ENCODE measurements at regions of chr9 and their contacts with region 1.

Region 1: DNA sequence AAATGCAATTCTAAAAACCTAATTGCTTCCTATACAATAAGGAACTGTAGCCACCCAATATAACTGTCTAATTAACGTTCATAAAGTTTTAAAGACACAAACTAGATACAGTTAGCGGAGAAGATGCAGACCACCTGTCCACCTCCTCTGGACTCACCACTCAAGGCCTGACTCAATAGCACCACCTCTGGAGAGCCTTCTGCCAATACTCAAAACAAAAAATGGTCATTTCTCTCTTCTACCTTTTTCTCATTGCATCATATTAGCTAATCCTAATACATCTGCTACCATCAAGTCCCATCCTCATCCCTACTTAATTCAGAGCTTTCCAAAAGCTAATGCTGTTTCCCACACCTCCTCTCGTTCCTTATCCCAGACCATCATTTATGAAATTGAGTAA is 159.9 kb downstream of the MLLT3 start:
- DNase-seq: no peak
- ATAC-seq: no peak
- H3K4me3 ChIP-seq: no peak overlapping the region
- H3K4me3 Mint-ChIP-seq: peak overlapping the region in 3 of 10 donors; percentile 16 to 31 (median 17)
- H3K27ac ChIP-seq: no peak overlapping the region
- H3K27ac Mint-ChIP-seq: peak overlapping the region in 1 of 9 donors; percentile 3
- H3K4me1 ChIP-seq: peaks cover 0 to 31% of the 10 kb centered on the region in 2 donors
- H3K4me1 Mint-ChIP-seq: peaks cover 43 to 89% (median 81%) of the 10 kb centered on the region in 7 donors
- H3K27me3 ChIP-seq: no peaks in the 10 kb centered on the region
- H3K27me3 Mint-ChIP-seq: no peaks in the 10 kb centered on the region

Region 2: DNA sequence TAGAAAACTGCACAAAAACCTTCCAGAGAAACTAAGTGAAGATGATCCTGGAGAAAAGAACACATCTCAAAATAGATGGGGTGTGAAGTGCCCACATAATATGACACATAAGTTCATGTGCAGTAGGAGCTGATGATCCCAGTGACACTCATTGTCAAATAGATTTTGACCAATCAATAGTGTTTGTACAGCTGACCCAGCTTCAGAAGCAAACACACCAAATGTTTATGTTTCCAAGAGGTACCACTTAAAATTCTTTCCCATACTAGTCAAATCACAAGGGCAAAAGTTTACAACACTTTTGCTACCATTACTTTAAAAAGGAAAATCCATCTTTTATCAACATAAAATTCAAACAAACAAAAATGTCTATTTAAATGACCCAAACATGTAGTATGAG is 15.1 kb before region 1 on chr9:
- CTCF ChIA-PET with region 1: no interaction called
- POLR2A ChIA-PET with region 1: no interaction called
- intact Hi-C with region 1: loop called in 1 of 2 experiments (anchors 2 kb)
- DNase-seq: no peak
- ATAC-seq: no peak
- H3K4me3 ChIP-seq: no peak overlapping the region
- H3K4me3 Mint-ChIP-seq: no peak overlapping the region
- H3K27ac ChIP-seq: no peak overlapping the region
- H3K27ac Mint-ChIP-seq: no peak overlapping the region
- H3K4me1 ChIP-seq: peaks cover 0 to 8% of the 10 kb centered on the region in 2 donors
- H3K4me1 Mint-ChIP-seq: peaks cover 14 to 56% (median 35%) of the 10 kb centered on the region in 7 donors
- H3K27me3 ChIP-seq: no peaks in the 10 kb centered on the region
- H3K27me3 Mint-ChIP-seq: no peaks in the 10 kb centered on the region

Region 3: DNA sequence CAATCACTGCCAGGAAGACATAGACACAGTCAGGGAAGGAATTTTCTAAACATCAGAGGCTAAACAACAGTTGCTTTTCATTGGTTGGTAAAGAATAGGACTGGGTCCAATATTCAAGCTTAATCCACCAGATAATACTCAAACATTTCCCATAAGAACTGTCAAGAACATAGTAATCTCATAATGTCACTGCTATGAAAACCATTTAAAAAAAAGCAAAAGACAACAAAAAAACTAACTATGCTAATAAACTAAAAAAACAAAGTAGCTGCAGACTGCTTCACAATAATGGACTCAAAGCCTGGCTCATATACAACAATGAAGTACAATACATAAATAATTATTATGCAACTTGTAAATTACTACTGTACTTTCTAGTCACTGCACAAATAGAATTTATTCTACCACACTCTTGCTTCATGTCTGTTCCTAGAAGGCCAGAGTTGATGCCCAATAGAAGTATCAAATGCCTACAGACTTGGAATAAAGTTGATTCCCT is 11.2 kb after region 1 on chr9:
- CTCF ChIA-PET with region 1: interaction called, 4 read pairs
- POLR2A ChIA-PET with region 1: interaction called, 3 read pairs
- intact Hi-C with region 1: loop called in 1 of 2 experiments (anchors 1 kb)
- DNase-seq: no peak
- ATAC-seq: no peak
- H3K4me3 ChIP-seq: no peak overlapping the region
- H3K4me3 Mint-ChIP-seq: no peak overlapping the region
- H3K27ac ChIP-seq: no peak overlapping the region
- H3K27ac Mint-ChIP-seq: no peak overlapping the region
- H3K4me1 ChIP-seq: peaks cover 0 to 15% of the 10 kb centered on the region in 2 donors
- H3K4me1 Mint-ChIP-seq: peaks cover 18 to 92% (median 86%) of the 10 kb centered on the region in 7 donors
- H3K27me3 ChIP-seq: no peaks in the 10 kb centered on the region
- H3K27me3 Mint-ChIP-seq: no peaks in the 10 kb centered on the region

Region 4: GRCh38 chr9:20479419-20480155 is 17.2 kb after region 1 on chr9:
- CTCF ChIA-PET with region 1: interaction called, 4 read pairs
- POLR2A ChIA-PET with region 1: interaction called, 3 read pairs
- intact Hi-C with region 1: loop called in 1 of 2 experiments (anchors 1 kb)
- DNase-seq: no peak
- ATAC-seq: no peak
- H3K4me3 ChIP-seq: no peak overlapping the region
- H3K4me3 Mint-ChIP-seq: no peak overlapping the region
- H3K27ac ChIP-seq: no peak overlapping the region
- H3K27ac Mint-ChIP-seq: peak overlapping the region in 1 of 9 donors; percentile 60
- H3K4me1 ChIP-seq: peaks cover 0 to 10% of the 10 kb centered on the region in 2 donors
- H3K4me1 Mint-ChIP-seq: peaks cover 23 to 89% (median 77%) of the 10 kb centered on the region in 7 donors
- H3K27me3 ChIP-seq: no peaks in the 10 kb centered on the region
- H3K27me3 Mint-ChIP-seq: no peaks in the 10 kb centered on the region

Measured in naive thymus-derived CD4-positive, alpha-beta T cell (primary cell).